Colonic mucosa (tissue), 4 donors: ENCODE measurements at regions of chr20 and their contacts with region 1.

Region 1: GRCh38 chr20:33653218-33653899 is 8.8 kb upstream of the C20orf144 start:
- DNase-seq: peak; percentile 73
- H3K4me3 ChIP-seq: no peak overlapping the region
- H3K27ac ChIP-seq: peak overlapping the region; percentile 23
- H3K4me1 ChIP-seq: peaks cover 6% of the 10 kb centered on the region
- H3K27me3 ChIP-seq: no peaks in the 10 kb centered on the region
- CTCF ChIP-seq: peak; percentile 84

Region 2: GRCh38 chr20:33459599-33459998 is 193.8 kb before region 1 on chr20:
- intact Hi-C with region 1: loop called (anchors 5 kb)
- DNase-seq: no peak
- H3K4me3 ChIP-seq: no peak overlapping the region
- H3K27ac ChIP-seq: no peak overlapping the region
- H3K4me1 ChIP-seq: no peaks in the 10 kb centered on the region
- H3K27me3 ChIP-seq: no peaks in the 10 kb centered on the region
- CTCF ChIP-seq: no peak